Endothelial cell of umbilical vein (primary cell): ENCODE measurements at regions of chr2 and their contacts with region 1.

Region 1: DNA sequence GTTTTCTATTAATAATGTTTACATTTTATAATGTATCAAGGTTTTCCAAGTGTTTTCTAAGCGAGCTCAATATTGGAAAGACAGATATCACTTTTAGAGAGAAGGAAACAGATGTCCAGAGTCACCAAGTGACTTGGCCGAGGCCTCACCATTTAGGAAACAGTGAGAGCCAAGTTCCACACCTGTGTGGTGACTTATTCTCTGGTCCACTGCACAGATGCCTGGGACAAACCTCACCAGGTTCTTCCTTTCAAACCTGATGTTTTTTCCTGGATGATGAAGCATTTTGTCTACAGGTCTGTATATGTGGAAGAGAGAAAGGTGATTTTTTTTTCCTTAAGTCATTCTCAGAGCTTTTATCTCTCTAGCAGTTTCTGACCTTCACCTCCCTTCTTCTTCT is 280.7 kb downstream of the LPIN1 start:
- DNase-seq: no peak
- H3K4me3 ChIP-seq: no peak overlapping the region
- H3K27ac ChIP-seq: no peak overlapping the region
- H3K4me1 ChIP-seq: no peaks in the 10 kb centered on the region
- H3K27me3 ChIP-seq: no peaks in the 10 kb centered on the region
- CTCF ChIP-seq: no peak
- POLR2A ChIP-seq: no peak

Region 2: GRCh38 chr2:11998218-11998617 is 28.9 kb before region 1 on chr2:
- CTCF ChIA-PET with region 1: no interaction called
- POLR2A ChIA-PET with region 1: no interaction called
- dilution Hi-C with region 1: no loop called
- intact Hi-C with region 1: loop called (anchors 1 kb)
- DNase-seq: peak; percentile 43
- H3K4me3 ChIP-seq: no peak overlapping the region
- H3K27ac ChIP-seq: no peak overlapping the region
- H3K4me1 ChIP-seq: peaks cover 12% of the 10 kb centered on the region
- H3K27me3 ChIP-seq: no peaks in the 10 kb centered on the region
- CTCF ChIP-seq: no peak
- POLR2A ChIP-seq: no peak